ENCODE measurements at regions of chr16 and their contacts with region 1.

Region 1: GRCh38 chr16:74617206-74617788 is 10.4 kb upstream of the GLG1 start:
- DNase-seq: no peak
- H3K4me3 ChIP-seq: no peak overlapping the region
- H3K27ac ChIP-seq: no peak overlapping the region
- H3K4me1 ChIP-seq: no peaks in the 10 kb centered on the region
- H3K27me3 ChIP-seq: no peaks in the 10 kb centered on the region
- CTCF ChIP-seq: no peak

Region 2: GRCh38 chr16:74591876-74592614 is 25.3 kb before region 1 on chr16:
- CTCF ChIA-PET with region 1: no interaction called
- POLR2A ChIA-PET with region 1: interaction called, 10 read pairs
- intact Hi-C with region 1: no loop called
- DNase-seq: no peak
- H3K4me3 ChIP-seq: no peak overlapping the region
- H3K27ac ChIP-seq: no peak overlapping the region
- H3K4me1 ChIP-seq: peaks cover 10% of the 10 kb centered on the region
- H3K27me3 ChIP-seq: no peaks in the 10 kb centered on the region
- CTCF ChIP-seq: no peak

Region 3: DNA sequence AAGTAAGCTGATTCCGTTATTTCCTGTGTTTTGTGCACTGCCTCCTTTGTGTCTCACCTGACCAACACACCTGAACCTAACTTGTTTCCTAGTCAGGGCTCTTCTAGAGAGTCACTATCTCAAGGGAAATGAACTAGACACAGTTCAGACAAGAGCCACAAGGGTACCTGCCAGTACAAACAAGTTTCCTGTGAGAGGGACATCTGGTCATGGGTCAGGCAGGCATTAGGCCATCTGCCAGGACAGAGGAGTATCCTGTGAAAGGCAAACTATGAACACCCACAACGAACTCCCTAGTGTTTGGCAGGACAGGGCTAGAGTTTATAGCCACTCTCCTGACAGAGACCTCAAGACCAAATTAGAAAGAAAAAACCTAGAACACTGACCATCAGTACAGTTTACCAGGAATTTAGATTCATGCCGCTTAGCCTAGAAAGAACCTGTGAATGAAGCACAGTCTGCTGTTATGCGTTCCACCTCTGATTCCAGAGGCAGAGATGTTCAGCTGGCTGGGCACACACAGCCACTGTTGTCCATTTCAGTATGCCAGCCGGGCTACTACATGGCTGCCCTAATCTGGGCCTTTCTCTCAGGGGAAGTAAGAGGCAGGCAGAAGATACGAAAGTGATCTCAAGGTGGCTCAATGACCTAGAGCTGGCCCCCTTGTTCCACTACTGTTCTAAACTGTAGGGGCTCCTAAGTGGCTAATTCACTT is 10.4 kb after region 1 on chr16:
- CTCF ChIA-PET with region 1: no interaction called
- POLR2A ChIA-PET with region 1: no interaction called
- intact Hi-C with region 1: no loop called
- DNase-seq: no peak
- H3K4me3 ChIP-seq: no peak overlapping the region
- H3K27ac ChIP-seq: no peak overlapping the region
- H3K4me1 ChIP-seq: no peaks in the 10 kb centered on the region
- H3K27me3 ChIP-seq: no peaks in the 10 kb centered on the region
- CTCF ChIP-seq: no peak

Region 4: GRCh38 chr16:74923766-74924460 is 306.6 kb after region 1 on chr16:
- CTCF ChIA-PET with region 1: no interaction called
- POLR2A ChIA-PET with region 1: no interaction called
- intact Hi-C with region 1: no loop called
- DNase-seq: no peak
- H3K4me3 ChIP-seq: no peak overlapping the region
- H3K27ac ChIP-seq: no peak overlapping the region
- H3K4me1 ChIP-seq: no peaks in the 10 kb centered on the region
- H3K27me3 ChIP-seq: no peaks in the 10 kb centered on the region
- CTCF ChIP-seq: no peak

Measured in PC-9 (cell line).